Activated CD8-positive, alpha-beta T cell treated with anti-CD3 and anti-CD28 coated beads for 36 hours (primary cell): ENCODE measurements at regions of chr3 and their contacts with region 1.

Region 1: DNA sequence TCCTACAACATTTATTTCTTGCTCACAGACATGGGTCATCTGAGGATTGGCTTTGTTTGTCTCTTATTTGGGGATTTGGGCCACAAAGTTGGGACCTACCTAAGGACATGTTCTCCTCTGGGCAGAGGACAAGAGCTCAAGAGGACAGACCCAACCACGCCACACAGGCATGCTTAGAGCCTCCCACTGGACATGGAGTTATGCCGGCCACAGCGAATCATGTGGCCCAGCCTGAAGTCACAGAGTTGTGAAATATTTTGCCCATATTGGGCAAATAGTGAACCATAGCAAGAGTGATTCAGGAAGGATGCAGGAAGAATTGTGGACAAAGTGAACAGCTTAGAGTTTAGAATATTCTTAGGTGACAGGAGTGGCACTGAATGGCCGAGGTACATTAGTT is 9.9 kb downstream of the TRAK1 start:
- DNase-seq: no peak
- ATAC-seq: no peak
- H3K4me3 Mint-ChIP-seq: no peak overlapping the region
- H3K27ac Mint-ChIP-seq: no peak overlapping the region
- H3K4me1 Mint-ChIP-seq: peaks cover 32% of the 10 kb centered on the region
- H3K27me3 Mint-ChIP-seq: no peaks in the 10 kb centered on the region
- CTCF ChIP-seq: no peak

Region 2: DNA sequence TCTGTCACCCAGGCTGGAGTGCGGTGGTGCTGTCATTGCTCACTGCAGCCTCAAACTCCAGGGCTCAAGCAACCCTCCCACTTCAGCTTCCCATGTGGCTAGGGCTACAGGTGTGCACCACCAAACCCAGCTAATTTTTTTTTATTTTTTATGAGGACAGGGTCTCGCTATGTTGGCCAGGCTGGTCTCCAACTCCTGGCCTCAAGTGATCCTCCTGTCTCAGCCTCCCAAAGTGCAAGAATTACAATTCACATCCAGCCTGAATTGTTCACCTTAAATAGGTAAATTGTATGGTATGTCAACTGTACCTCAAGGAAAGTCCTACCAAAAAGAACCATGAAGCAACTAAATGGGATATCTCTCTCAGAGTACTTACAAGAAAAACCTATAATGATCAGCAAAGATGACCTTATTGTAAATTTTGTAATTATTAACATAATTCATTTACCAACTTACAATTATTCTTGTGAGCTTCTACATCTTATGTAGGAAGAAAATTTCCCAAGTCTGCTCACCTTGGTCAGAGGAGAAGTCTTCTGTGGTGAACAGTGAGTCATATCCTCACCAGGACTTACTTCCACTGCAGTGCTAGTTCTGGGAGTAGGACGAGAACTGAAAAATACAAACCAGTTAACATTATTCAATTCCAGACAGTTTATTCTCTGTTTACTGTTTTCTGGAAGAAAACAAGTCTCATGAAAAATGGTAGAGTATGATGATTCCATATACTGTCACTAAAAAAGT is 193.5 kb before region 1 on chr3:
- CTCF ChIA-PET with region 1: interaction called, 15 read pairs
- POLR2A ChIA-PET with region 1: no interaction called
- intact Hi-C with region 1: no loop called
- DNase-seq: no peak
- ATAC-seq: no peak
- H3K4me3 Mint-ChIP-seq: no peak overlapping the region
- H3K27ac Mint-ChIP-seq: no peak overlapping the region
- H3K4me1 Mint-ChIP-seq: no peaks in the 10 kb centered on the region
- H3K27me3 Mint-ChIP-seq: no peaks in the 10 kb centered on the region
- CTCF ChIP-seq: no peak

Region 3: GRCh38 chr3:41961750-41962679 is 139.0 kb before region 1 on chr3 and contains the start of gene ULK4:
- CTCF ChIA-PET with region 1: interaction called, 10 read pairs
- POLR2A ChIA-PET with region 1: no interaction called
- intact Hi-C with region 1: loop called (anchors 5 kb)
- DNase-seq: peak; percentile 96
- ATAC-seq: peak; percentile 91
- H3K4me3 Mint-ChIP-seq: peak within 1 kb of the TSS; percentile 85
- H3K27ac Mint-ChIP-seq: peak within 1 kb of the TSS; percentile 88
- H3K4me1 Mint-ChIP-seq: peaks cover 9% of the 10 kb centered on the region
- H3K27me3 Mint-ChIP-seq: no peaks in the 10 kb centered on the region
- CTCF ChIP-seq: no peak
- total RNA-seq, gene ULK4: 6.8 to 6.9 TPM

Region 4: DNA sequence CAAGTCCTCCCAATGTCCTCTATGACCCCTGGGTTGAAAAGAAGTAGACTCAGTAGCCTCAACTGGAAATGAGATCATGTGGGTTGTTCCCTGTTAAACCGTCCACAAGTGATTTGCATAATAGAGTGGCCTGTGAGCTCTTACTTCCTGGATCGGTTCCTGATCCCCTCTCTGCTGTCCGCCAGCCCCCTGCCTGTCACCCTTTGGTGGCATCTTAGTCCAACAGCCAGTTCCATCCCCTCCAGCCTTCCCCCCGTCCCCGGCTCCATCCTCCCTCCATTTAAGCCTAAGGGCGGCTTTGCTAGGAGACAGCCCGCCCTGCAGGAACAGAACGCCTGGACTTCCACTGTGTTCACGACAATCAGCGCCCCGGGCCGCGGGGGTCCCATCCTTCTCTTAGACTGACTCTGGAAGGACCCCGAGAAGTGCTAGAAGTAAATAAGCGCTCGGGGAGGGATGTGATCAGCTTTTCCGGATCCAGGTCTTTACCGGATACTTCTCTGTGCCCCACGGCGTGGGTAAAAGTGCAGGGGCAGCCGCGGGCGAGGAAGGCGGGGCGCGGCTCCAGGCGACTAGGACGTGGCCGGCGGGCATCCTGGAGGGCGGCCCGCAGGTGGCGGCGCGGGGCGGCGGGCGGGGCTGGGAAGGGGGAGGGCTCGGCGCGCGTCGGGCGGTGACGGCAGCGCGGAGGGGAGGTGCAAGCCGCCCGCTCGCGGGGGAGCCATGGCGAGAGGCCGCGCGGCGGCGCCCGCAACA is 87.9 kb before region 1 on chr3:
- CTCF ChIA-PET with region 1: interaction called, 16 read pairs
- POLR2A ChIA-PET with region 1: interaction called, 5 read pairs
- intact Hi-C with region 1: no loop called
- DNase-seq: peak; percentile 75
- ATAC-seq: peak; percentile 75
- H3K4me3 Mint-ChIP-seq: peak overlapping the region; percentile 80
- H3K27ac Mint-ChIP-seq: peak overlapping the region; percentile 93
- H3K4me1 Mint-ChIP-seq: peaks cover 38% of the 10 kb centered on the region
- H3K27me3 Mint-ChIP-seq: no peaks in the 10 kb centered on the region
- CTCF ChIP-seq: no peak

Region 5: GRCh38 chr3:42051384-42052131 is 49.5 kb before region 1 on chr3:
- CTCF ChIA-PET with region 1: interaction called, 14 read pairs
- POLR2A ChIA-PET with region 1: no interaction called
- intact Hi-C with region 1: no loop called
- DNase-seq: peak; percentile 10
- ATAC-seq: peak; percentile 39
- H3K4me3 Mint-ChIP-seq: no peak overlapping the region
- H3K27ac Mint-ChIP-seq: no peak overlapping the region
- H3K4me1 Mint-ChIP-seq: peaks cover 40% of the 10 kb centered on the region
- H3K27me3 Mint-ChIP-seq: no peaks in the 10 kb centered on the region
- CTCF ChIP-seq: no peak

Region 6: DNA sequence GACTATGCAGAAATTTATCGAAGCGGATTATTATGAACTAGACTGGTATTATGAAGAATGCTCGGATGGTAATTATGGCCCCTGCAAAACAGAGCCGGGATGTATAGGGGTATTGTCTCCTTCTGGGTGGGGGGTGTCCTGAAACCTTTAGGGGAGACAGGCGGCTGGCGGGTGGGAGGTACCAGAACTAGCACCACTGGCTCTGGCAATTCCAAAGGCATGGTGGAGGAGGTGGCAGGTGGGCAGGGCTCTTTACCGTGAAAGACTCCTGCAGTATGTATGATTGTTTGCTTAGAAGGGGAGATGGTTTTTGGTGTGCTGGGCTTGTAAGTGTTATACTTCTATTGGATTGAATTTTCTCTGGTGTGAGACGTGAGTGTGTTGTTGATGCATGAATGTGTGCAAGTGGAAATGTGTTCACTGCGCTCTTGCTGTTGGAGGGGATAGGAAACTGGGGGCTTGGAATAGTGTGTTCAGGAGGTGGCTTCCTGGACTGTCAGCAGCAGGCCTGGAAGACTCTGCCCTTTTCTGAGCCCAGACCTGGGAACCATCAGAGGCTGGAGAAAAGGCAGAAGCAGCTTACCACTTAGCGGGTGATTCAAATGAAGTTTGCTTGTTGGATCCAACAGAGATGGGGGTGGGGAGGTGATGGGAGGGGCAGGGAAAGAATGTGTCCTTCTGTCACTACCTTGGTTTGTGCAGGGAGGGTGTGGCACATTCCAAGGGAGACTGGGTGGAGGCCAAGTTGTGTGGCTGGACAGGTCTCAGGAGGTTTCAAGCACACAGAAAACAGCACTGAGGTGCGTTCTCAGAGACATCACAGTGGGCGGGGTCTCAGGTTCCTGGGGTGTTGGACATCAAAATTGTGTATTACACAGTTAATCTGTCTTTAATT is 48.7 kb after region 1 on chr3:
- CTCF ChIA-PET with region 1: no interaction called
- POLR2A ChIA-PET with region 1: no interaction called
- intact Hi-C with region 1: no loop called
- DNase-seq: no peak
- ATAC-seq: no peak
- H3K4me3 Mint-ChIP-seq: no peak overlapping the region
- H3K27ac Mint-ChIP-seq: no peak overlapping the region
- H3K4me1 Mint-ChIP-seq: peaks cover 26% of the 10 kb centered on the region
- H3K27me3 Mint-ChIP-seq: no peaks in the 10 kb centered on the region
- CTCF ChIP-seq: no peak

Region 7: GRCh38 chr3:42190701-42191462 is 89.8 kb after region 1 on chr3:
- CTCF ChIA-PET with region 1: interaction called, 14 read pairs
- POLR2A ChIA-PET with region 1: no interaction called
- intact Hi-C with region 1: no loop called
- DNase-seq: peak; percentile 79
- ATAC-seq: peak; percentile 78
- H3K4me3 Mint-ChIP-seq: no peak overlapping the region
- H3K27ac Mint-ChIP-seq: no peak overlapping the region
- H3K4me1 Mint-ChIP-seq: peaks cover 13% of the 10 kb centered on the region
- H3K27me3 Mint-ChIP-seq: no peaks in the 10 kb centered on the region
- CTCF ChIP-seq: peak; percentile 81